Vagina (tissue), 2 donors: ENCODE measurements at regions of chr2 and their contacts with region 1.

Region 1: DNA sequence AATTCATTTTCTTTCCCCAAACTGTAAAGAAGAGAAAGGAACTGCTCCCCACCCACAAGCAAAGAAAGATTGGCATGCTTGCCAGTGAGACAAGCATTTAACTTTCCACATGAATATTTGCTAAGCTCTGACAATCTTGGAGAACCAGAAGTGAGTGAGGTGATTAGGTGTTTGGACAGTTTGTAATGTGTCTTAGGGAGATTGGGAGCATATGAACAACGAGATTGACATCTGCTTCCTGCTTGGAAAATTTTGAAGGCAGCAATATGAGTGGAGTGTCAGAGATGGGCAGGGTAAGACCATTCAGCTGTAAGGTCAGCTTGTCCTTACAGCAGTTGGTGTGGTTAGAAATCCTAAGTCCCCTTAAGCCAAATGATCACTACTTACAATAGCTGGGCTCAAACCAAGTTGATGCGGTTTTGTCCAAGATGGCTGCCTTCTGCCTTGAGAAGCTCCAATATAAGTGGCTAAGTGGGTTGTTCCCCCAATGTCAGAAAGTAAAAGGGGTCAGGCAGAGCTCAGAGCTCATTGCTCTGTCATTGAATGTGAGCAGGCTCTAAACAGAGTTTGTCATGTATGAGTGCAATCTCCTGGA is 36.0 kb upstream of the GALNT5 start:
- DNase-seq: no peak
- H3K4me3 ChIP-seq: no peak overlapping the region
- H3K27ac ChIP-seq: no peak overlapping the region
- H3K4me1 ChIP-seq: no peaks in the 10 kb centered on the region
- H3K27me3 ChIP-seq: no peaks in the 10 kb centered on the region
- CTCF ChIP-seq: no peak
- POLR2A ChIP-seq: no peak

Region 2: DNA sequence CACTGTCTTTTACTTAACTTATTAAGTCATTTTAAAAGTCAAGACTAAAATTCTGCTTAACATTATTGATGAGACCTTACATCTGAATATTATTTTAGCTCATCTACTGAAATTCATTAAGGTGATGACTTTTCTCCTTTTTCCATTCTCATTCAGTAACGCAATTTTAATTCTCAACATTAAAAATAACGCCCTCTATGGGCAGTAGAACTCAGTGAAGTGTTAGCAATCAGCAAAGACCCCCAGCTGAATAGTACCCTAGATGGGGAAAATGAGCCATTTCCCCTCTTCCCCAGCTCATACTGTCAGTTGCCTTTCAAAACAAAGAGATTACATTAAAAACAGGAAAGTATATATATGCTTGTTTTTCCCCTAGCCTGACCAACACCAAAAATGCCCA is 1092.3 kb before region 1 on chr2:
- intact Hi-C with region 1: loop called (anchors 5 kb)
- DNase-seq: no peak
- H3K4me3 ChIP-seq: no peak overlapping the region
- H3K27ac ChIP-seq: no peak overlapping the region
- H3K4me1 ChIP-seq: no peaks in the 10 kb centered on the region
- H3K27me3 ChIP-seq: no peaks in the 10 kb centered on the region
- CTCF ChIP-seq: no peak
- POLR2A ChIP-seq: no peak

Region 3: GRCh38 chr2:157470321-157470720 is 248.8 kb after region 1 on chr2:
- intact Hi-C with region 1: no loop called
- DNase-seq: no peak
- H3K4me3 ChIP-seq: no peak overlapping the region
- H3K27ac ChIP-seq: no peak overlapping the region
- H3K4me1 ChIP-seq: no peaks in the 10 kb centered on the region
- H3K27me3 ChIP-seq: no peaks in the 10 kb centered on the region
- CTCF ChIP-seq: no peak
- POLR2A ChIP-seq: no peak